HEK293 (cell line): ENCODE measurements at regions of chr9 and their contacts with region 1.

Region 1: DNA sequence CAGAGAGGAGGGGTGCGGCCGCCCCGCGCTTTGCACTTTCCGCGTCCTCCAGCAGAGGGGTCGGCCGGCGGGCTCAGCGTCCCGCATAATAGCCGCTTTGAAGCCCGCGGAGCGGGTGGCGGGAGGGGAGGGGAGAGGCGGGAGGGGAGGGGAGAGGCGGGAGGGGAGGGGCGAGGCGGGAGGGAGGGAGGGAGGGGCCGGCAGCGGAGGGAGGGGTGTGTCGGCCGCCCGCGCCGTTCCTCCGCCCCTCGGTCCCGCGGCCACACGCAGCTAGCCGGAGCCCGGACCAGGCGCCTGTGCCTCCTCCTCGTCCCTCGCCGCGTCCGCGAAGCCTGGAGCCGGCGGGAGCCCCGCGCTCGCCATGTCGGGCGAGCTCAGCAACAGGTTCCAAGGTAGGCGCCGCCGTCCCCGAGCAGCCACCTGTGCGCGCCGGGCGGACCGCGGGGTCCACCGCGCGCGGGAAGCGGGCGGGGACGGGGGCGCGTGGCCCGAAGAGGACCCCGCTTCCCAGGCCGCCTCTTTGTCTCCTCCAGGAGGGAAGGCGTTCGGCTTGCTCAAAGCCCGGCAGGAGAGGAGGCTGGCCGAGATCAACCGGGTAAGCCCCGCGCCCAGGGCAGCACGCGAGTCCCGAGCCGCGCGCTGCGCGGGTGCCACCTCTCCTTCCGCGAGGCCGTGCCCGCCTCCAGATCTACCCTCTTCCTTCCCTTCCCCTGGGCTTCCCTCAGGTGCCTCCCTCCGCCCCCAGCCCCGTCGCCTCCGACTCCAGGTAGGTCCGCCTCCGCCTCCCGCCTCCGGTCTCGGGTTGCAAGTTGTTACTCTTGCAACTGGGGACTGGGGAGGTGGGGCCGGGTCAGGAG is at the start of gene AIF1L:
- H3K4me3 ChIP-seq: peak within 1 kb of the TSS; percentile 53
- H3K27ac ChIP-seq: peak within 1 kb of the TSS; percentile 49; the same call in 1 of the 2 replicates
- H3K4me1 ChIP-seq: no peaks in the 10 kb centered on the region
- CTCF ChIP-seq: 0 out of 2 replicates have a peak, but pooled peaks have one; percentile 17

Region 2: GRCh38 chr9:131111854-131112311 is 15.4 kb after region 1 on chr9:
- CTCF ChIA-PET with region 1: interaction called, 12 read pairs
- POLR2A ChIA-PET with region 1: interaction called, 11 read pairs
- H3K4me3 ChIP-seq: no peak overlapping the region
- H3K27ac ChIP-seq: no peak overlapping the region
- H3K4me1 ChIP-seq: no peaks in the 10 kb centered on the region
- CTCF ChIP-seq: no peak

Region 3: DNA sequence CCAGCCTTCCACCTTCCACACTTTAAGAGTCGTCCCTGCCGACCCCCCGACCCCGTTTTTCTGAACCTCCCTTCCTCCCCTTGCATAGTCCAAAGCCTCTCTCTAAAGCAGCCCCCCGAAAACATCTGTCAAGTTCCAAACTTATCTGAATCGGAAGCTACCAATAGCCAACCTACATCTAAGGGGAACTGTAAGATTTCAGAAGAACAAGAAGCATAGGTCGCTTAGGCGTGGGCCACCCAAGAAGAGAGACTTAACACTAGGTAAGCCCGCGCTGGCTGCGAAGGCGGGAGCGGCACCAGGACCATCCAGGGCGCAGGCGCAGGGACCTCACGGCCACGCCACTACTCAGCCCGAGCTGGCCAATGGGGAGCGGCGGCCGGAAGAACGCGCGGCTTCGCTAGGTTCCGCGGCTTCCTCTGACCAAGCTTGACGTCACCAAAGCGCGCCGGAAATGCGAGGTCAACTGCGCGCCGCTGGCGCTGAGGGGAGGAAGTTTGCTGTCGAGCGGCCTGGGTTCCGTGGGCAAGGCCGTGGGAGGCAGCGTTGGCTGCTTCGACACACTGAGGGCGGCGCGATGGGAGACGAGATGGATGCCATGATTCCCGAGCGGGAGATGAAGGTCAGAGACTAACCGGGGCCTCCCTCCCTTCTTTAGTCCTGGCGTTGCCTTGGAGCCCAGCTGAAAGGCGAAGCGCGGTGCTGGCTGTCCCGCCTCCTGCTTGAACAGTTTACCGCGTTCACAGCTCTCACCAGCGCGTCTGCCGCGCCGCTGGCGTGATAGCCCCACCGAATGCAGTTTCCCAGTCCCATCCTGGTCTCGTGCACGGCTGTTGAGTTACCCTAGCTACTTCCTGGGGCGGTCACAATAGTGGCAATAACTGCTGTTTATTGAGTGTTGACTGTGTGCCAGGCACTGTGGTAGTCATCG is 28.9 kb after region 1 on chr9 and contains the start of gene NUP214:
- CTCF ChIA-PET with region 1: interaction called, 4 read pairs
- POLR2A ChIA-PET with region 1: interaction called, 61 read pairs
- H3K4me3 ChIP-seq: peak within 1 kb of the TSS; percentile 84
- H3K27ac ChIP-seq: peak within 1 kb of the TSS; percentile 28
- H3K4me1 ChIP-seq: no peaks in the 10 kb centered on the region
- CTCF ChIP-seq: no peak